Activated CD4-positive, alpha-beta T cell treated with anti-CD3 and anti-CD28 coated beads for 36 hours (primary cell): ENCODE measurements at regions of chr1 and their contacts with region 1.

Region 1: GRCh38 chr1:108559215-108560186 is at the start of gene EEIG2:
- DNase-seq: peak; percentile 94
- ATAC-seq: peak; percentile 84
- H3K4me3 Mint-ChIP-seq: peak within 1 kb of the TSS; percentile 90
- H3K27ac Mint-ChIP-seq: peak within 1 kb of the TSS; percentile 81
- H3K4me1 Mint-ChIP-seq: peaks cover 41% of the 10 kb centered on the region
- H3K27me3 Mint-ChIP-seq: no peaks in the 10 kb centered on the region
- total RNA-seq, gene EEIG2: 5.0 to 7.6 TPM

Region 2: GRCh38 chr1:107294686-107295085 is 1264.8 kb before region 1 on chr1:
- CTCF ChIA-PET with region 1: no interaction called
- POLR2A ChIA-PET with region 1: no interaction called
- intact Hi-C with region 1: no loop called
- DNase-seq: no peak
- ATAC-seq: no peak
- H3K4me3 Mint-ChIP-seq: no peak overlapping the region
- H3K27ac Mint-ChIP-seq: no peak overlapping the region
- H3K4me1 Mint-ChIP-seq: no peaks in the 10 kb centered on the region
- H3K27me3 Mint-ChIP-seq: peaks cover 4% of the 10 kb centered on the region

Region 3: DNA sequence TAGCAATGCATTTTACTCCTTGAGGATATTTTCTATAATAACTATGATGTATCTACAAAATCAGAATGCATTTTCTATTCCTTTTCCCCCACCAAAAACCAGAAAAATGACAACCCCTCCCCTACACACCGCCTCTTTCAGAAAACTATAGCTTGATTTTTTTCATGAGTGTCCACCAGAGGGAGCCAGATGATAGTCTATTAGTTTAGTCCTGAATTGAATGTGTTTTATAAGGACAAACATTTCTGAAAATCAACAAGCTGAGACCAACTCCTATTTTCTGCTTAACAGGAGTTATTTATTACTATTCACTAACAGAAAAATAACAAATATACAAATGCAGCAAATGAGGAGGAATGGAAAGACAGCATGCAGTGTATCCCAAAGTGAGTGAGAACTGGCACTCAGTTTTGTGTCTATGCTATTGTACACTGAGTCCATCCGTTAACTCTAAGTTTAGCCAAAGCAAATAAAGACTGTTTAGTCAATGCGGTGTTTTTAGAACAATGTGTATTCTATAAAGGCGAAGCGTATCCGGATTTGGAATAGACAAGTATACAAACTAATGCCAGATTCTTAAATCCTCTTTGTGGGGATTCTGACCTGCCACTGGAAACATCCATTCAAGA is 777.2 kb before region 1 on chr1:
- CTCF ChIA-PET with region 1: interaction called, 3 read pairs
- POLR2A ChIA-PET with region 1: no interaction called
- intact Hi-C with region 1: loop called (anchors 5 to 10 kb)
- DNase-seq: peak; percentile 35
- ATAC-seq: peak; percentile 45
- H3K4me3 Mint-ChIP-seq: no peak overlapping the region
- H3K27ac Mint-ChIP-seq: no peak overlapping the region
- H3K4me1 Mint-ChIP-seq: peaks cover 26% of the 10 kb centered on the region
- H3K27me3 Mint-ChIP-seq: no peaks in the 10 kb centered on the region

Region 4: DNA sequence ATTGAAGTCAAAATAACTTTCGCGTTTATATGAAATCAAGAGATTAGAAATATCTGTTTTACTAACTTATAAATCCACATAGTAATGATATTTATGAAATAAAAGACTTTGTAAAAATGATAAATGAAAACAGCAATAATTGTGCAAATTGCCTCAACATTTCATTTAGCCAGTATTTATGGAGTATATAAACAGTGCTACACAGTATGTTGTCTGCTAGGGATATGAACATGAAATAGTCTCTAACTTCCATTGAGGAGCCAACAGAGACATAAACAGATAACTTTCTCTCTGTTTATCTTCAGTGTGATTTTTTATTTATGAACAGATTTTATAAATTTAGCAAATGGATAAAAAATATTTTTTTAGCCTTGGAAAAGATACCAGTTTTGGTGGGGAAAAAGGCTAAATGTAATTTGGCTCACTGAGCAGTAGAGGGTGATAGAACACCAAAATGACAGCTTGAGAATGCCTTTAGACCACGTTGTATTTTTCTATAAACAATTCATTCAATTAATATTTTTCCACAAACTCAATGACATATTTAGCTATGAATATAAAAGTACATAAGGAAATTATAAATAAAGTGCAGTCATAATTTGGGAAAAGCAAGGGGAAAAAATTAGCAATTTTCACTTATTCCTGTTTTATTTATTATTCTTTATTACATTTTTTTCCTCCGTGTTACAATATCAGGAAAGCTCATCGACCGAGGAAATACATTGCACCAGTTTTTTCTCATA is 47.1 kb before region 1 on chr1:
- CTCF ChIA-PET with region 1: interaction called, 109 read pairs
- POLR2A ChIA-PET with region 1: no interaction called
- intact Hi-C with region 1: loop called (anchors 1 kb)
- DNase-seq: no peak
- ATAC-seq: no peak
- H3K4me3 Mint-ChIP-seq: no peak overlapping the region
- H3K27ac Mint-ChIP-seq: no peak overlapping the region
- H3K4me1 Mint-ChIP-seq: no peaks in the 10 kb centered on the region
- H3K27me3 Mint-ChIP-seq: peaks cover 22% of the 10 kb centered on the region

Region 5: DNA sequence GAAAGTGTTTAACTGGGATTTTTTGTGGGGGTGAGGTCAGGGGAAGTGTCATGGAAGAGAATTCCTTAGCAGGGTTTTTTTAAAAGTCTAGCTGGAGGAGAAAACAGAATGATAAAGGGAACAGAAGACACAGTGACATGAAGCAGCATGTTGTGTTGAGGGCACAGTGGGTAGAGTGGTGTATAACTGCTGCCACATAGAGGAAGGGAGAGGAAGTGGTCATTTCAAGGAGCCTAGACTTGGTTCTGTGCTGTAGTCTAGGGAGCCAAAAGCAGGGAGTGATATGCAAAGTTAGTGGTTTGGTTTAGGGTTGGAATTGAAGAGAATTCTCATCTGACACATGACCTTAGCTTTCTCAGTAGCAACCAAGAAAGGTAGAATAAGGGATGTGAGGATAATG is 10.6 kb after region 1 on chr1:
- CTCF ChIA-PET with region 1: interaction called, 22 read pairs
- POLR2A ChIA-PET with region 1: interaction called, 3 read pairs
- intact Hi-C with region 1: no loop called
- DNase-seq: peak; percentile 38
- ATAC-seq: peak; percentile 99
- H3K4me3 Mint-ChIP-seq: no peak overlapping the region
- H3K27ac Mint-ChIP-seq: no peak overlapping the region
- H3K4me1 Mint-ChIP-seq: peaks cover 5% of the 10 kb centered on the region
- H3K27me3 Mint-ChIP-seq: no peaks in the 10 kb centered on the region

Region 6: DNA sequence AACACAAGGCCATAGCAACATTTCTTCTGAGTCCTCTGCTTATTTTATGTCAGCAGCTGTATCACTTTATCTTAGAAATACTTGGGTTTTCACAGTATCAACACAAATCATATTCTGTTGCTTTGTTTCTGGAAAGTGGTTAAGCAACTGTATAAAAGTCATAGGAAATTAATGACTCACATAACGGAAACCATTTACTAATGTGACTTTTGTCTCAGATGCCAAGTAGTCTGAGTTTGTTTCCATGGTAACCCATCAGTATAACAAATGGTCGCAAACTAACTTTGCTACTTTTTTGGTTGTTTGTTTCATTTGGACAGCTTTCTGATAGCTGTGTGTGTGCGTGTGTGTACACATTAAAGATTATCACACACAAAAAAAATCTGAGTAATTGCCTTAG is 31.5 kb after region 1 on chr1:
- CTCF ChIA-PET with region 1: interaction called, 5 read pairs
- POLR2A ChIA-PET with region 1: interaction called, 5 read pairs
- intact Hi-C with region 1: loop called (anchors 1 to 2 kb)
- DNase-seq: no peak
- ATAC-seq: peak; percentile 79
- H3K4me3 Mint-ChIP-seq: no peak overlapping the region
- H3K27ac Mint-ChIP-seq: no peak overlapping the region
- H3K4me1 Mint-ChIP-seq: peaks cover 63% of the 10 kb centered on the region
- H3K27me3 Mint-ChIP-seq: no peaks in the 10 kb centered on the region

Region 7: DNA sequence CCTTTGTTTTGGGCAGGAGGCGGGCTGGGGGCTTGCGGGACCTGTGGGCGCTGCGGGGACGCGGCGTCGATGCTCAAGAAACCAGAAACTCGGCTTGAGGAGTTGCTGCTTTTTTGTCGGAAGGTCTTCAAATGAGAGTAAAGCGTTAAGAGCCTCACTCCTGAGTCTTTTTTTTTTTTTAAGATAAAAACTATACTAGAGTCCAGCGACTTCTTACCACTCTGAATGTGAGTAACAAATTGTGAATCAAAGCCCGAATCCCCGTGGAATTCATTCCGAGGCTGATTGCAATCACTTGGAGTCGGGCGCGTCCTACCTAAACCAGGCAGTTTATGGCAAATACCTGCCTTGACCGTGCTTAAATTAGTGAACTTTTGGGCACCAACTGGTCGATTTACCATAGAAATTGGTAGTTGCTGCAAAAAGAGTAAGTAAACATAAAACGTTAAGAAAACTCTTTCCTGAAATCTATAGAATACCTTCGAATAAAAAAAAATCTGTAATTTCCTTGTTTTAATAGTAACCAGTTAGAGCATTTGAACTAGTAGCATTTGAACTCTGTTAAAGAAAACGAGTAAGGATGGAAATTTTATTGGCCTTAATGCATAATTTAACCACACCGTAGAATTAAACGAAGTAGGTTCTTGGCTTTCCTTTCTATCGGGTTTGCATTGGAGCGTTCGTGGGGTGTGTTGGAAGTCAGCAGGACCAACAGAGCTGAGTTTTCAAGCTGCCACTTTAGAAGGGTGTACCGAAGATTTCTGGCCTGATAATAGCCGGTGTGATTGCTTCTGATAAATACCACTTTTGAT is 318.1 kb after region 1 on chr1:
- CTCF ChIA-PET with region 1: no interaction called
- POLR2A ChIA-PET with region 1: no interaction called
- intact Hi-C with region 1: loop called in 1 of 2 experiments (anchors 2 kb)
- DNase-seq: no peak
- ATAC-seq: peak; percentile 2
- H3K4me3 Mint-ChIP-seq: peak overlapping the region; percentile 91
- H3K27ac Mint-ChIP-seq: peak overlapping the region; percentile 78
- H3K4me1 Mint-ChIP-seq: peaks cover 5% of the 10 kb centered on the region
- H3K27me3 Mint-ChIP-seq: peaks cover 5% of the 10 kb centered on the region